AG04449 (cell line): ENCODE measurements at regions of chr5 and their contacts with region 1.

Region 1: GRCh38 chr5:138230981-138231589 is 18.0 kb upstream of the CDC23 start:
- DNase-seq: no peak
- H3K4me3 ChIP-seq: no peak overlapping the region
- CTCF ChIP-seq: no peak

Region 2: GRCh38 chr5:138241688-138242571 is 10.8 kb after region 1 on chr5:
- CTCF ChIA-PET with region 1: interaction called, 52 read pairs
- POLR2A ChIA-PET with region 1: no interaction called
- DNase-seq: no peak
- H3K4me3 ChIP-seq: peak overlapping the region; percentile 44
- CTCF ChIP-seq: no peak